ENCODE measurements at regions of chr7 and their contacts with region 1.

Region 1: GRCh38 chr7:75639071-75639885 is 99.5 kb downstream of the HIP1 start:
- DNase-seq: no peak

Region 2: GRCh38 chr7:75667938-75668337 is 28.7 kb after region 1 on chr7:
- intact Hi-C with region 1: loop called (anchors 5 kb)
- DNase-seq: no peak

Region 3: GRCh38 chr7:75688200-75689136 is 49.2 kb after region 1 on chr7:
- intact Hi-C with region 1: loop called (anchors 5 kb)
- DNase-seq: peak; percentile 61

Region 4: DNA sequence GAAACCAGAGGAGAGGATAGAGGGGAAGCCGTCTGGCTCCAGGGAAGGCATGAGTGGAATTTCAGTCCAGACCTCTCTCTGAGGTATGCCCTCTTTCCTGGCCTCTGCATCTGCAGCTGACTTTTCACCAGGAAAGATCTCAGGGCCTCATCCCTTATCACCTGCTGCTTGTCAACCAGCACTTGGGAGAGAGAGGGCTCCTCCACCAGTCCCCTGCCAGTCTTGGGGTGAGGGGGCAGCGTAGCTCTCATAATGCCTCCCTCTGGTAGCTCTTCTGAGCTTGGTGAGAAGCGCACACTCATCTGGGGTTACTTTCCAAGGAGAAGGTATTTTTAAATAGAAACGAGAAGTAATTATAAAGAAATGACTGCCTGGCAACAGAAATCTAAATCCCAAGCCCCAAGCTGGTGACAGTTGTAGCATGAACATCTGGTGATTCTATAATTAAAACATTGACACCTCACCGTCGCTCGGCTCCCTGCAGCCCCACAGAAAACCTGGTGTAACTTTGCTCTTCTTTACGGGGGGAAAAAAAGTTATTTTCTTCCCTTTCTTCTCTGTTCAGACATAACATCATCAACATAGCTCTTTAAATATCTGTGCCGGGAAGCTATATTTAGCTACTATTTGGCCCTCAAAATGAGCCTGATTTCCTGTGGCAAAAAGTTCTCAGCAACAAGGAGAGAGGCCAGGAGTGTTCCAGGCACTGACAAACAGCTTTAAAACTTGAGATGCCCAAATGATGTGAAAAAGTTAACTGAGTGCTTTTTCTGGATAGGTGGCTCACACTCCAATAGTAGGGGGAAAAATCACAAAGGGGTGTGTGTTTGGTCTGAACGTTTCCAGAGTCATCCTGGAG is 72.6 kb after region 1 on chr7:
- intact Hi-C with region 1: no loop called
- DNase-seq: no peak

Region 5: DNA sequence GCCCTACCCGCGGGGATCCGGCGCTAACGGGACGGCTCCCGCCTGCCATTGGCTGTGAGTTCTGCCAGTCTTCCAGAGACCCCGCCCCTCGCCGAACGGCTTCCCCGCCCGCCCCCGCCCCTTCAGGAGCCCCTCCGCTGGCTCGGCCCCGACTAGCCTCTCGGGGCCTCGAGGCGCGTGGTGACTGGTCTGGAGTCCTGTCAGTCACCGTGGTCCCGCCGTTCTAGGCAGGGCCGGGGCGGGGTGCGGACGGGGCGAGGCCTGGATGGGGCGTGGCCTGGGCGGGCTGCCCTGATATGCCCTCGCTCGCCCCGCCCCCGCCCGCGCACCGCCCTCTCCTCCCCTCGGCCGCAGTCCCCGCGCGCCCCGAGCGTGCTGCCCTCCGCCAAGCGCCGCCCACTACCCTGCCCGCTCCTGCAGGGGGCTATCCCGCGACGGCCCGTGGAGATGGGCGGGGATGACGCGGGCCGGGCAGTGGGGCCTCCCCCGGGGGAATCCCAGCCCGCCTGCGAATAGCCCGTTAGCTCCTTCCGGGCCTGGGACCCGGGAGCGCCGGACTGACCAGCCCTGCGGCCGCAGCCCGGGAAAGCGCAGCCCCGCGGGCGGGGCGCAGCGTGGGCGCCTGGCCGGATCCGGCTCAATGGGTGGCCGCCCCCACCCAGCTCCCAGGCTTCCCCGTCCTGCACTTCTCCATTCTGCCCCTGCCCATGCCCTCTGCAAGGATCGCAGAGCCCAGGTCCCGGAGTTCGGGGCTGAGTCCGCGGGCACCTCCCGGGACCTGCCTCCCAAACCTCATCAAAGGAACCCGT is 99.9 kb after region 1 on chr7:
- intact Hi-C with region 1: loop called (anchors 10 kb)
- DNase-seq: peak; percentile 100